ENCODE measurements at regions of chr19 and their contacts with region 1.

Region 1: DNA sequence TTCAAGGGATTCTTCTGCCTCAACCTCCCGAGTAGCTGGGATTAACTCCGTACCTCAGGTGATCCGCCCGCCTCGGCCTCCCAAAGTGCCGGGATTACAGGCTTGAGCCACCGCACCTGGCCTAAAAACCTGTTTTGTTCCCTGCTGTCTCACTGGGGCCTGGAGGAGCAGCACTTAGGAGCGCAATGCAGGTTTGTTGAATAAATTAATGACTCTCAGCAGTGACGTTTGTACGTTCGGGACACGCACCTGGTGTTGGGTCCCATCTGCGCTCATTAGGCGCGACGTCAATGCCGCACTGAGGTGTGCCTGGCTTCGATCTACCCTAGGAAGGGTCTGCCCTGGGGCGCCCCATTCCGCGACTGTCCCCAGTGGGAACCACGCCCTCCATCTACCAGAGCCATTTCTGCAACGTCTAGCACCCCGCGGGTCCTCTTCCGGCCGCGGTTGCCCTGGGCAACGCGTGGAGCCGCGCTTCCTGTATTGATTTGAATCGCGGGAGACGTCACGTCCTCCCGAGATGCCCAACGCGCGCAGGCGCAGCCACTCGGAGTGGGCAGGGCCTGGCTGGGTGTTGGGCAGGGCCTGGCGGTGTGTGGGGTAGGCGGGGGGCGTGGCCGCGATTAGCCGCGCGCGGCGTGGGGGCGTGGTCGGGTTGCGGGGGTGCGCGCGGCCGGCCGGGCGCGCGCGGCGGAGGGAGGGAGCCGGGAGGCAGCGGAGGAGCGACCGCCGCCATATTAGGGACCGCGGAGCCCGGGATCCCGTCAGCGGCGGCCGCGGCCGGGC is at the start of gene FZR1:
- DNase-seq: peak; percentile 99
- H3K4me3 Mint-ChIP-seq: peak within 1 kb of the TSS; percentile 90
- H3K27ac Mint-ChIP-seq: peak within 1 kb of the TSS; percentile 92
- H3K4me1 Mint-ChIP-seq: peaks cover 39% of the 10 kb centered on the region
- H3K27me3 Mint-ChIP-seq: no peaks in the 10 kb centered on the region
- total RNA-seq, gene FZR1: 40.3 to 46.3 TPM

Region 2: DNA sequence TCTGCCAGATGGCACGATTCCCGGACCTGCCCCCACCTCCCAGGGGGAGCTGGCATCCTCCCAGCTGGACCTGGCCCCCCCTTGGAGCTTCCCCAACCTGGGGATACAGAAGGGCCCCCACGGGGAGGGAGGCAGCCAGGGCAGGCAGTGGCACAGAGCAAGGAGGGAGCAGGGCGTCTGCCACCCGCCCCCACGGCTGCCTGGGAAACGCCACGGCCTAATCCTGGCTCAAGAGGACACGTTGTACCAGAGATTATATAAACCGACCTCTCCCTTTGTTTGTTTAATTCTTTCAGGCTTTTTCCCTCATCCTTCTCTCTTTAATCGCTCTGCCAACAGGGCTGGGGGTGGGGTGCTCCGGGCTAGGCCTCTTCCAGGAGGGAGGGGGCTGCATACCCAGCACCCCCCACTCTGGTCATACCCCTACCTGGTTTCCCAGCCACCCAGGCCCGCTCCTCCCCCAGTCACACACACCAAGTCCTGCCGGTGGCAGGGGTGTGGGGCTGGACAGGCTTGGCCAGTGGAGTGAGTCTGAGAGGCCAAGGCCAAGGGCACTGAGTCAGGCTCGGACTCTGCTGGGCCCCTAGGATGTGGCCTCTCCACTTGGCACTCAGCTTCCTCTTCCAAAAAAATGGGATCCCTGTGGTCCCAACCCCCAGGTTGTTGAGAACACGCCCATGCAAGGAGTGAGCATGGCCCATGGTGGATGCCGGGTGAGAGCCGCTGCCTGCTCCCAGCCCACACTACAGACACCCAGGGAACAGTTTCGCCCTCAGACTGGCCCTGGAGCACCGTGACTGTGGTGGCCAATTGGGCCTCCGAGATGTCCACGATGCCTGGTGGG is 168.9 kb before region 1 on chr19:
- CTCF ChIA-PET with region 1: no interaction called
- intact Hi-C with region 1: no loop called
- DNase-seq: no peak
- H3K4me3 Mint-ChIP-seq: no peak overlapping the region
- H3K27ac Mint-ChIP-seq: no peak overlapping the region
- H3K4me1 Mint-ChIP-seq: peaks cover 15% of the 10 kb centered on the region
- H3K27me3 Mint-ChIP-seq: no peaks in the 10 kb centered on the region

Region 3: GRCh38 chr19:3572132-3572854 is 66.5 kb after region 1 on chr19:
- CTCF ChIA-PET with region 1: no interaction called
- intact Hi-C with region 1: loop called (anchors 1 kb)
- DNase-seq: peak; percentile 100
- H3K4me3 Mint-ChIP-seq: peak overlapping the region; percentile 75
- H3K27ac Mint-ChIP-seq: peak overlapping the region; percentile 56
- H3K4me1 Mint-ChIP-seq: peaks cover 14% of the 10 kb centered on the region
- H3K27me3 Mint-ChIP-seq: no peaks in the 10 kb centered on the region

Measured in activated naive CD4-positive, alpha-beta T cell treated with anti-CD3 and anti-CD28 coated beads for 36 hours (primary cell).